Body of pancreas (tissue), 4 donors: ENCODE measurements at regions of chr15 and their contacts with region 1.

Region 1: GRCh38 chr15:90143166-90143655 is 40.9 kb upstream of the IDH2 start:
- DNase-seq: peak; percentile 93 to 96 (median 96)
- ATAC-seq: peak; percentile 96
- H3K4me3 ChIP-seq: no peak overlapping the region
- H3K27ac ChIP-seq: peak overlapping the region; percentile 75 to 92 (median 85)
- H3K4me1 ChIP-seq: peaks cover 53% of the 10 kb centered on the region
- H3K27me3 ChIP-seq: no peaks in the 10 kb centered on the region
- CTCF ChIP-seq: peak; percentile 56 to 97 (median 95)
- POLR2A ChIP-seq: peak; percentile 31 to 77 (median 70)

Region 2: DNA sequence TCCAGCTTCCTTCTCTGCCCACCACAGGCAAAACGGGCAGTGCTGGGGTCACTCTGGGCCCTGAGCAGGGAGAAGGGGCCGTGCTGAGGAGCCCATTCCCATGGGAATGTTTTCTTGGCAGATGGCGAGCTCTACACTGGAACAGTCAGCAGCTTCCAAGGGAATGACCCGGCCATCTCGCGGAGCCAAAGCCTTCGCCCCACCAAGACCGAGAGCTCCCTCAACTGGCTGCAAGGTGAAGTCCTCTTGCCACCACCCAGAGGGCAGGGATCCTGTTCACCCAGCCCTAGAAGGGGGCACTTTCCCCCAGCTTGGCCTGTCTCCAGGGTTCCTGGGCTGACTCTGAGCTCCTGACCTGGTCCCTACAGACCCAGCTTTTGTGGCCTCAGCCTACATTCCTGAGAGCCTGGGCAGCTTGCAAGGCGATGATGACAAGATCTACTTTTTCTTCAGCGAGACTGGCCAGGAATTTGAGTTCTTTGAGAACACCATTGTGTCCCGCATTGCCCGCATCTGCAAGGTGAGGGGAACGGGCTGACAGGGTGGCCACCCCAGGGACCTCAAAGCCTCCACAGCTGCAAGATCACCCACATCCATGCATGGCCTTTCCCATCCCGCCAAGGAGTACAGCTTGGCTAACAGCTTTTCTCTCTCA is 78.2 kb after region 1 on chr15:
- intact Hi-C with region 1: loop called (anchors 5 kb)
- DNase-seq: peak; percentile 85 to 89 (median 88)
- ATAC-seq: peak; percentile 94
- H3K4me3 ChIP-seq: no peak overlapping the region
- H3K27ac ChIP-seq: peak overlapping the region; percentile 12 to 63 (median 62)
- H3K4me1 ChIP-seq: peaks cover 24% of the 10 kb centered on the region
- H3K27me3 ChIP-seq: no peaks in the 10 kb centered on the region
- CTCF ChIP-seq: peak; percentile 67 to 91 (median 81)
- POLR2A ChIP-seq: no peak